ENCODE measurements at regions of chr9 and their contacts with region 1.

Region 1: DNA sequence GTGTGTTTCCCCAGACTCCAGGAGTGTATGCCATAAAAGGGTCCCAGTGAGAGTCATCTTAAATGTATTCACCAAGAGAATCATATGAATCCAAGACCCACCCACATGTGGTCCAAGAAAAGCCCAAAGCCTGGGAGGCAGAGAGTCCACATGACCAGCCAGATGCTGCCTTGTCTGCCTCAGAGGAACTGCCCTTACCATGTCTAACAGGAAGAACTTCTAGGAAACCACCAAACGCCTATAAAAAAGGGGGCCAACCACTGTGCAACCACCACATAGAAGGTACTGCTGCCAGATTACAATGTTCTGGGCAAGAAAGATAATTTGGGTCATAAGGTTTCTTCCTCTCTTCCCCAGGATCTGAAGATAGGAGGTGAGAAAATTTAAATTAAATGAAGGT is 129.8 kb upstream of the SLC24A2 start:
- DNase-seq: no peak
- ATAC-seq: no peak
- H3K4me3 ChIP-seq: no peak overlapping the region
- H3K27ac ChIP-seq: no peak overlapping the region
- H3K4me1 ChIP-seq: no peaks in the 10 kb centered on the region
- H3K27me3 ChIP-seq: peaks cover 13% of the 10 kb centered on the region; the same call in 1 of the 2 replicates
- CTCF ChIP-seq: no peak
- POLR2A ChIP-seq: no peak
- RAD21 ChIP-seq: no peak

Region 2: DNA sequence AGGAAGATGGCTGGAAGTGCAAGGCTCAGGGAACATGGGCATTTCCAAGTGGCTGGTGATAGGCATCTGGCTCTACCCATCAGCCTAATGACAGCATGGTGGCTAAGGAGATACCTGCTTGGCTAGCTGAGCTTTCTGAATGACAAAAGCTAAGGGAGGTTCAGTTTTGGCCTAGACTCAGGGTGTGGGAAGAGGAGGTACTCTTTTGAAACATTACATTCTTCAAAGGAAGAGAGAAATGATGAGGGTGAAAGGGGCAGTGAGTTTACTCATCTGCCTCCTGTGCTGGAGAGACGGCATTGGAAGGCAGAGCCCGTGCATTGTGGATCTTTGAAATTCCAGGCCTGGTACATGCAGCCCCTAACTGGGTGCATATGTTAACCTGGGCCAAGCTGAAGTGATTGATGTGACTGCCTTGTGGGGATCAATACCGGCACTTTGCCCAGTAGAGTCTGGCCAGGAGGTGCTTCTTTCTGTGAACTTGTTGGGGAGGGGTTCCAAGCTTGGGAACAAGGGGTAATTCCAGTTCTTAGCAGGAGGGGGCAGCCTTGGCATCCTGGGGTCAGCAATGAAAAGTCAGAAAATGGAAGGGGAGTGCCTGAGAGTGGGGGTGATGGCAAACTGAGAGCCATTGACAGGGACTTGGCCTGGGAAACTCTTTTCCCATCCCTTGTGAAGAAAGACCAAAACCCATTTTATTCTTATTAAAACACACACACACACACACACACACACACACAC is 401.3 kb before region 1 on chr9:
- CTCF ChIA-PET with region 1: interaction called, 13 read pairs
- POLR2A ChIA-PET with region 1: no interaction called
- RAD21 ChIA-PET with region 1: no interaction called
- intact Hi-C with region 1: loop called (anchors 5 kb)
- DNase-seq: no peak
- ATAC-seq: peak; percentile 70
- H3K4me3 ChIP-seq: no peak overlapping the region
- H3K27ac ChIP-seq: no peak overlapping the region
- H3K4me1 ChIP-seq: peaks cover 0 to 10% of the 10 kb centered on the region in 2 experiments; a peak in 2 of 4 replicates
- H3K27me3 ChIP-seq: peaks cover 7% of the 10 kb centered on the region
- CTCF ChIP-seq: peak; percentile 8 to 64 (median 63); a peak in 4 of 6 replicates
- POLR2A ChIP-seq: no peak
- RAD21 ChIP-seq: peak; percentile 42; the same call in 1 of the 2 replicates

Region 3: DNA sequence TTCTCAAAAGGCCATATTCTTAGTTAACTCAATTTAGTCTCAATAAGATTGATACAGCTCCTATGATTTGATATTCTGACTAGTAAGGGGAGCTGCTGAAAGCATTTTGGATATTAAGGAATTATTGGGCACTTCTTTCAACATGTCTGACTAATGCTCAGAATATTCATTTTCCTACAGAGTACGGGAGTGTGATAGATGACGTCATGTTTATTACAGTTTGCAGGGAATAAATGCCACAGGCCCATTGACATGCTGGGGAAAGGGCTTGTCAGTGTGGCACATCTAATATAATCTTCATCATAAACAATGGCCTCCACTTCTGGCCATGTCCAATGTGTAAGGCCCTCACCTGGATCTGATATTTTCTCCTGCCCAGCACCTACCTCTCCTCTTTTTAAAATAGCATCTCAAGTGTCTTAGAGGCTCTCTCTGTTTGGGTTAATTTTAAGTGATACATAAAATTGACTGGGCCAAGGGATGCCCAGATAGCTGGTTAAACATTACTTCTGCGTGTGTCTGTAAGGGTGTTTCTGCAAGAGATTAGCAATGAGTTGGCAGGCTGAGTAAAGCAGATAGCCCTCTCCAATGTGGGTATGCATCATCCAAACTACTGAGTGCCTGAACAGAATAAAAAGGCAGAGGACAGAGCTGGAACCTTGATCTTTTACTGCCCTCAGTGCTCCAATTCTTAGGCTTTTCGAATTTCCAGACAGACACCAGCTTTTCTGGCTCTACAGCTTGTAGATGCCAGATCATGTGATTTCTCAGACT is 229.1 kb before region 1 on chr9:
- CTCF ChIA-PET with region 1: no interaction called
- POLR2A ChIA-PET with region 1: no interaction called
- RAD21 ChIA-PET with region 1: no interaction called
- intact Hi-C with region 1: no loop called
- DNase-seq: no peak
- ATAC-seq: no peak
- H3K4me3 ChIP-seq: no peak overlapping the region
- H3K27ac ChIP-seq: no peak overlapping the region
- H3K4me1 ChIP-seq: no peaks in the 10 kb centered on the region
- H3K27me3 ChIP-seq: peaks cover 7% of the 10 kb centered on the region
- CTCF ChIP-seq: no peak
- POLR2A ChIP-seq: no peak
- RAD21 ChIP-seq: no peak